Esophagus muscularis mucosa (tissue), 4 donors: ENCODE measurements at regions of chr3 and their contacts with region 1.

Region 1: GRCh38 chr3:3015185-3016089 is 94.7 kb downstream of the IL5RA start:
- DNase-seq: no peak
- H3K4me3 ChIP-seq: no peak overlapping the region
- H3K27ac ChIP-seq: no peak overlapping the region
- H3K4me1 ChIP-seq: no peaks in the 10 kb centered on the region
- H3K27me3 ChIP-seq: peaks cover 0 to 4% (median 0%) of the 10 kb centered on the region in 4 donors
- CTCF ChIP-seq: peak in 2 of 3 experiments; percentile 20 to 38
- EP300 ChIP-seq: no peak
- POLR2A ChIP-seq: no peak

Region 2: DNA sequence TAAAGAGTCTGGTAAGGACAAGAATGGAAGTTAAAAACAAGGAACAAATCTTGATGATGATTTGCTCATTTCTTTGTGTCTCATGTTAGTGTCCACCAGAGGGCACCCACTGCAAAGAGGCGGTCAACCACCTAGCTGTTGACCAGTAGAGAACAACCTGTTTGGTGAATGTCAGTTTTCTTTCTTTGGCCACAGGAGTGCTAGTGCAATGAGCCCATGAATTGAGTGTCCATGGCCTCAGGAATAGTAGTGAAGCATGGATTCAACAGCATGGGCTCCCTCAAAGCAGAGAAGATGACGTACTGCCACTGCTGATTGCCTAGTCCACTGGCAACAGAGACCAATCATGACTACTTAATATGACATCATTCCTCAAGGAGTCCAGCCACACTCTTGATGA is 1933.3 kb before region 1 on chr3:
- intact Hi-C with region 1: loop called (anchors 10 kb)
- DNase-seq: no peak
- H3K4me3 ChIP-seq: no peak overlapping the region
- H3K27ac ChIP-seq: no peak overlapping the region
- H3K4me1 ChIP-seq: no peaks in the 10 kb centered on the region
- H3K27me3 ChIP-seq: no peaks in the 10 kb centered on the region
- CTCF ChIP-seq: peak in 2 of 3 experiments; percentile 35 to 51
- EP300 ChIP-seq: no peak
- POLR2A ChIP-seq: no peak

Region 3: DNA sequence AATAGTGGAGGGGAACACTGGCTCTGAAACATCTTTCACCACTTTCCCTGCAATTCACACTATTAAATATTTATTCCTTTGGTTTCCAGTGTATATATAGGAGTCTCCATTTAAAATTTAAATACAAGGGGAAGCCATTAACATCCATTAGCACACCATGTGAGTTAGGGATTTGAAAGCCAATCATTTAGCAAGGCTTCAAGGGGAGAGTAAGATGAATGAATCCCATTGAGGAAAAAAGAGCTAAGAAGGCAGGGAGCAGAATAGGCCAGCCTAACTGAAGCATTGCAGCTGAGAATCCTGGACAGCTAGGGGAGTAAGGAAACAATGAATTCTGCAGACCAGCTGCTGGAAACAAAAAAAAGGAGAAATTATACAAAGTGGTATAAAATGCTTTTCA is 331.4 kb before region 1 on chr3:
- intact Hi-C with region 1: no loop called
- DNase-seq: no peak
- H3K4me3 ChIP-seq: no peak overlapping the region
- H3K27ac ChIP-seq: no peak overlapping the region
- H3K4me1 ChIP-seq: no peaks in the 10 kb centered on the region
- H3K27me3 ChIP-seq: no peaks in the 10 kb centered on the region
- CTCF ChIP-seq: no peak
- EP300 ChIP-seq: no peak
- POLR2A ChIP-seq: no peak

Region 4: DNA sequence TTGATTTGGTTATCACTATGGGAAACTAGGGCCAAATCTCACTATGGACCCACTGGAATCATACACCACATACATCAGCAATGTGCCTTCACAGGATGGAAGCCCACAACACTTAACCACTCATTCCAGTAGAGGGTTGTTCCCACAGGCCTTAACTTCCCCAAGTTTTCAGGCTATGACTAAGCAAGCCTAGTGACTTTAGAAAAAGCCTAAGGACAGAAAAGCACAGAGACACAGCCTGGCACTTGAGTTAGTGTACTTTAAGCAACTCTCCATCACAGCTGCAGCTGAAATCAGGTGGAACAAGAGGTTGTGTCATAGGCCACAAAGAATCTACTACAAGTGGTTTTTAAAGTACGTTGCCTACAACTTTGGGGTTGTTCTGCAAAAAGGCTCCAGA is 912.5 kb after region 1 on chr3:
- intact Hi-C with region 1: no loop called
- DNase-seq: no peak
- H3K4me3 ChIP-seq: no peak overlapping the region
- H3K27ac ChIP-seq: no peak overlapping the region
- H3K4me1 ChIP-seq: no peaks in the 10 kb centered on the region
- H3K27me3 ChIP-seq: no peaks in the 10 kb centered on the region
- CTCF ChIP-seq: no peak
- EP300 ChIP-seq: no peak
- POLR2A ChIP-seq: no peak